Activated CD4-positive, alpha-beta memory T cell treated with anti-CD3 and anti-CD28 coated beads for 36 hours (primary cell): ENCODE measurements at regions of chr22 and their contacts with region 1.

Region 1: GRCh38 chr22:31661851-31662656 is at the start of gene PISD:
- DNase-seq: peak; percentile 98
- H3K4me3 Mint-ChIP-seq: peak within 1 kb of the TSS; percentile 98
- H3K27ac Mint-ChIP-seq: peak within 1 kb of the TSS; percentile 94
- H3K4me1 Mint-ChIP-seq: peaks cover 35% of the 10 kb centered on the region
- H3K27me3 Mint-ChIP-seq: peaks cover 2% of the 10 kb centered on the region
- total RNA-seq, gene PISD: 39.4 to 40.2 TPM

Region 2: DNA sequence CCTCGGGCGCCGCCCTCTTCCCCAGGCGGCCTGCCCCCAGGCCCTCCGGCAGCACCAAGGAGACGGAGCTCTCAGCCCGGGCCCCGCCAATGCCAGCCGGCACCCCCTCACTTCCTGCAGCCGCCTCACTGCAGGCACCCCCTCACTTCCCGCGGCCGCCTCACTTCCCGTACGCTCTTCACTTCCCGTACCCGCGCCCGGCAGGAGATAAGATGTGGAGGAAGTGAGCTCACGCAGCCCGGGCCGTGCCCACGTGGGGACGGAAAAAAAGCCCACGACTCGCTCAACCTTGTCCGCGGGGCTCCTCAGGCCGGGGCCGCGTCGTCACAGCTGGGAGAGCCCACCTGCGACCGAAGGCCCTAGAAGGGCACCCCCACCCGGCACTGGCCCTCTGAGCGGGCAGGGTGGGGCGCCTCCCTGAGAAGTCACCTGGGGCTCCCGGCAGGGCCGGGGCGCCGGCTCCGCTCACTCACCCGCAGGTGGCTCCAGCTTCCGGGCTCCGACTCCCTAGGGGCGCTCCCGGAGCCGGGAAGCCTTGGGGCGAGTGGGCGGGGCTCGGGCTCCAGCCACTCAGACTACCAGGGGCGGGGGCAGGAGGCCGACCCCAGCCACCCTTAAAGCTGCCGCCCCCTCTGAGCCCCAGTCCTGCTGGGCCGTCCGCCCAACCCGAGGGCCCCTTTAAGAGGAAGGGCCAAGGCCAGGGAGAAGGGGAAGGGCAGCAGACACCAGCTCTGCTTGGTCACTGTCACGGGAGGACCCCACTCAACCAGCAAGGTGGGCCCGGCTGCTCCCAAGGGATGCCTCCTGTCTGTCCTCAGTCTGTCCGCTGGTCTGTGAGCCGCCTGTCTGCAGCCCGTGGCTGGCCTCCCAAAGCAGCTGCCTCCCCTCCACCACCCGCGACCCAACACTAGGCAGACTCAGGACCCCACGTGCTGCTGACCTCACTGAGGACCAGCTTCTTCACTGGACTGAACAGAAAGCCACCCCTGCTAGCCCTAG is 31.4 kb before region 1 on chr22:
- CTCF ChIA-PET with region 1: interaction called, 4 read pairs
- POLR2A ChIA-PET with region 1: interaction called, 12 read pairs
- intact Hi-C with region 1: loop called (anchors 1 kb)
- DNase-seq: peak; percentile 93
- H3K4me3 Mint-ChIP-seq: peak overlapping the region; percentile 81
- H3K27ac Mint-ChIP-seq: peak overlapping the region; percentile 91
- H3K4me1 Mint-ChIP-seq: peaks cover 61% of the 10 kb centered on the region
- H3K27me3 Mint-ChIP-seq: no peaks in the 10 kb centered on the region

Region 3: DNA sequence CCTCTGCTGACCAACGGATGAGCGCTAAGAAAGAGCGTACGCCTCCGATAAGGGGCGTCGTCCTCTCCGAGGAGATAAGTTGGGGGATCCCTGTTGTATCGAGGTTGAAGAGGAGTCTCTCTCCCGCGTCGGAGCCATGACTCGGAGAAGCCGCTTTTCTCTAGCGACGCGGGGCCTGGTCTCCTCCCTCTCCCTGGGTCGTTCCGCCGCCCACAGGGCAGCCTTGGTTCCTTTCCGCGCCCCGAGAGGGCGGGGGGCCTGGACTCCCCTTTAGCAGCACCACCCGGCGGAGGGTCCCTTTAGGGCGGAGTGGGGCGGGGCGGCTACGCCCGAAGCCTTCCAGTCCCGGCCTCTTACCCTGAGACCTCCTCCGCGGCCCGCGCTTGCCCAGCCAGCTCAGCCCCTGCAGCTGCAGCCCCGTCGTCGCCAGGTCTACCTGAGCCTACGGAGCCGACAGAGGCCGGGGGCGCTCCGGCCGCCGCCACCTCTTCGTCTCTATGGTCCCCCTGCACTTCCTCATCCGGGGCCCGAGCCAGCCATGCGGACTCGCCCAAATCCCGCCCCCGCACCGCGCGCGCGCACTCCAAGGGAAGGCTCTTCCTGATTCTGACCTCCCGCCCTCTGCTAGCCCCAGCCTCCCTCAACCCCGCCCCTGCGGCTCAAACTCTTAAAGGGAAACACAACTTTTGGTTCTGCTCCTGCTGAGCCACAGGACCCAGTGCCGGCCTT is 87.7 kb after region 1 on chr22 and contains the start of gene PRR14L:
- CTCF ChIA-PET with region 1: interaction called, 7 read pairs
- POLR2A ChIA-PET with region 1: interaction called, 7 read pairs
- intact Hi-C with region 1: loop called (anchors 1 kb)
- DNase-seq: peak; percentile 99
- H3K4me3 Mint-ChIP-seq: peak within 1 kb of the TSS; percentile 80
- H3K27ac Mint-ChIP-seq: peak within 1 kb of the TSS; percentile 70
- H3K4me1 Mint-ChIP-seq: peaks cover 50% of the 10 kb centered on the region
- H3K27me3 Mint-ChIP-seq: no peaks in the 10 kb centered on the region
- total RNA-seq, gene PRR14L: 41.3 to 45.2 TPM

Region 4: GRCh38 chr22:31954535-31955523 is 292.8 kb after region 1 on chr22:
- CTCF ChIA-PET with region 1: interaction called, 39 read pairs
- POLR2A ChIA-PET with region 1: interaction called, 10 read pairs
- intact Hi-C with region 1: no loop called
- DNase-seq: no peak
- H3K4me3 Mint-ChIP-seq: no peak overlapping the region
- H3K27ac Mint-ChIP-seq: peak overlapping the region; percentile 40
- H3K4me1 Mint-ChIP-seq: peaks cover 91% of the 10 kb centered on the region
- H3K27me3 Mint-ChIP-seq: no peaks in the 10 kb centered on the region

Region 5: DNA sequence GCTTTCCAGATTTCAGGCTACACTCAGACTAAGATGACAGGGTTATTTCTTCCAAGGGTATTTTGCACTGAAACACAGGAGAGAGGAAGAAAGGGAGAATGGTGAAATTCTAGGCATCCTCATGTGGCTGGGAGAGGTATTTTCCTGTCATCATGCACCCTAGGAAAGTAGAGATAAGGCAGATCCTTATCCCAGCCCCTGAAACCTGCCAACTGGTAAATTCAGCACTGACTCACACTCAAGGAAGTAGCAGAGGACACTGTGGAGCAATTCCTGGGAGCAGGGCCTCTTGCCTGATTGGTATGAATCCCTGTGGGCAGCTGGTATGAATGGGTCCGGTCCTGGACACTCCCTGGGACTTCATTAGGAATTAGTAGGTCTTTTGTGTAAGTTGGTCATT is 343.4 kb after region 1 on chr22:
- CTCF ChIA-PET with region 1: no interaction called
- POLR2A ChIA-PET with region 1: no interaction called
- intact Hi-C with region 1: no loop called
- DNase-seq: no peak
- H3K4me3 Mint-ChIP-seq: no peak overlapping the region
- H3K27ac Mint-ChIP-seq: no peak overlapping the region
- H3K4me1 Mint-ChIP-seq: no peaks in the 10 kb centered on the region
- H3K27me3 Mint-ChIP-seq: peaks cover 20% of the 10 kb centered on the region

Region 6: GRCh38 chr22:32080904-32081303 is 418.9 kb after region 1 on chr22:
- CTCF ChIA-PET with region 1: interaction called, 9 read pairs
- POLR2A ChIA-PET with region 1: no interaction called
- intact Hi-C with region 1: loop called (anchors 2 kb)
- DNase-seq: peak; percentile 38
- H3K4me3 Mint-ChIP-seq: no peak overlapping the region
- H3K27ac Mint-ChIP-seq: no peak overlapping the region
- H3K4me1 Mint-ChIP-seq: no peaks in the 10 kb centered on the region
- H3K27me3 Mint-ChIP-seq: peaks cover 10% of the 10 kb centered on the region